ENCODE measurements at regions of chr2 and their contacts with region 1.

Region 1: GRCh38 chr2:113889471-113890252 is at the start of gene ACTR3:
- DNase-seq: peak; percentile 98 to 99 (median 99)
- H3K4me3 ChIP-seq: peak within 1 kb of the TSS; percentile 80 to 93
- H3K4me3 Mint-ChIP-seq: peak within 1 kb of the TSS; percentile 97 to 100 (median 99)
- H3K27ac ChIP-seq: peak within 1 kb of the TSS; percentile 93
- H3K27ac Mint-ChIP-seq: peak within 1 kb of the TSS; percentile 89 to 100 (median 98)
- H3K4me1 ChIP-seq: peaks cover 75% of the 10 kb centered on the region
- H3K4me1 Mint-ChIP-seq: peaks cover 62 to 88% (median 72%) of the 10 kb centered on the region in 4 donors
- H3K27me3 ChIP-seq: no peaks in the 10 kb centered on the region
- H3K27me3 Mint-ChIP-seq: no peaks in the 10 kb centered on the region
- total RNA-seq, gene ACTR3: 247 to 251 TPM

Region 2: DNA sequence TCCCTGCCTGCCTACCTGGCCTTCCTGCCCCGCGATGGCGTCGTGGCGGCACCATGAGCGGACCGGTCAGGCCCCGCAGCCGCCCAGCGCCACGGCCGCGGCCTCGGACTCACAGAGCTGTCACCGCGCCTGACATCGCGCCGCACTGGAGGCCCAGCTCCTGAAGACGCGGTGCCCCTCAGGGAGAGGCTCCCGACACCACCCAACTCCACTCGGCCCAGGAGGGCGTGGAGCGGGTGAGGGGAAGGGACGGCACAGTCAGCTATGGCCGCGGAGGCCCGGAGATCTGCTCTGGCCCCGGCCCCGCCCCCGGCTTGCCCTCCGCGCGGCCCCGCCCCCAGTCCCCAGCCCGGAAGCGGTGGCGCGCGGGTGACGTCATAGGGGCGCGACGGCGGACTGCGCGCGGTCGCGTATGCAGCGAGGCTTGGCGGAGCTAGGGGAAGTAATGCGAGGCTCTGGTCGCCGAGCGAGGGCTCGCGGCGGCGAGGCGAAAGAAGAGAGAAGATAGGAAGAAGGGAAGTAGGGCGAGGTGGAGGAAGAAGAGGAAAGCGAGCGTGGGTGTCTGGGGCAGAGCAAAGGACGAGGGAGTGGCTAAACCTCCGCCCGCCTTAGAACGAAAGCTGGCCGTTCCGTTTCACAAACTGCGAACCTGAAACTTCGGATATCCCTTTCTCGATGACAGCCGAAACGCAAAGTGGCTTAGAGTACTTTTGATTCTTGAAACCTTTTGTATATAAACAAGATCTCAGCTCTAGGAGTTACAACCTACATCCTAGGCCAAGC is 133.1 kb before region 1 on chr2 and contains the start of gene SLC35F5:
- CTCF ChIA-PET with region 1: interaction called, 4 read pairs
- POLR2A ChIA-PET with region 1: interaction called, 18 read pairs
- intact Hi-C with region 1: loop called (anchors 1 kb)
- DNase-seq: peak; percentile 87 to 97 (median 91)
- H3K4me3 ChIP-seq: peak within 1 kb of the TSS; percentile 95 to 100
- H3K4me3 Mint-ChIP-seq: peak within 1 kb of the TSS; percentile 92 to 99 (median 96)
- H3K27ac ChIP-seq: peak within 1 kb of the TSS; percentile 80
- H3K27ac Mint-ChIP-seq: peak within 1 kb of the TSS; percentile 96 to 100 (median 98)
- H3K4me1 ChIP-seq: peaks cover 25% of the 10 kb centered on the region
- H3K4me1 Mint-ChIP-seq: peaks cover 17 to 33% (median 25%) of the 10 kb centered on the region in 4 donors
- H3K27me3 ChIP-seq: no peaks in the 10 kb centered on the region
- H3K27me3 Mint-ChIP-seq: no peaks in the 10 kb centered on the region
- total RNA-seq, gene SLC35F5: 29.9 to 30.9 TPM

Region 3: DNA sequence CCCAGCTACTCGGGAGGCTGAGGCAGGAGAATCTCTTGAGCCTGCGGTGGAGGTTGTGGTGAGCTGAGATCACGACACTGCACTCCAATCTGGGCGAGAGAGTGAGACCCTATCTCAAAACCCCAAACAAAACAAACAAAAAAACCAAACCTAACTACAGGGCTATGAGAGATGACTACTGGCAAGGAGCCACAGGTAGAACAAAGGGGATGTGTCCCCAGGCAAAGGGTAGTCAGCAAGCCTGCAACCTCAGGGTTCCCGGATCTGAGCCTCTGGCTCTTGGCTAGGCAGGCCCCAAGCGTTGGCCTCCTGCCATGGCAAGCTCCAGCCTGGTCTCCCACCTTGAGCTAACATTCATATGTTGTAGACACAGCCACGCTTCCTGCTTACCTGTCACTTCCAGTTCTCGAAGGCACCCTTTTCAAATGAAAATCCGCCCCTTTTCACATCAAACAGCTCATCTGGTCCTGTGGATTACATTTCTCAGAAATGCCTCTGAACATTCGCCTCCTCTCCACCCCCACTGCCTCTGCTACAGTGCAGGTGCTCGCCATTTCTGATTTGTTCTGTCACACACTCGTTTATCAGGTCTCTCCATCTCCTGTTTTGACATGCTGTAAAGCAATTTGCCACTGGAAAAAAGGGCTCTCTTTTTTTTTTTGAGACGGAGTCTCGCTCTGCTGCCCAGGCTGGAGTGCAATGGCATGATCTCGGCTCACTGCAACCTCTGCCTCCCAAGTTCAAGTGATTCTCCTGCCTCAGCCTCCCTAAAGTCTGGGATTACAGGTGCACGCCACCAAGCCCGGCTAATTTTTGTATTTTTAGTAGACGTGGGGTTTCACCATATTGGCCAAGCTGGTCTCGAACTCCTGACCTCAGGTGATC is 12.9 kb before region 1 on chr2:
- CTCF ChIA-PET with region 1: interaction called, 7 read pairs
- POLR2A ChIA-PET with region 1: interaction called, 15 read pairs
- intact Hi-C with region 1: loop called (anchors 1 kb)
- DNase-seq: peak; percentile 72 to 86 (median 81)
- H3K4me3 ChIP-seq: no peak overlapping the region
- H3K4me3 Mint-ChIP-seq: peak overlapping the region; percentile 51 to 82 (median 74)
- H3K27ac ChIP-seq: peak overlapping the region; percentile 51
- H3K27ac Mint-ChIP-seq: peak overlapping the region; percentile 84 to 97 (median 91)
- H3K4me1 ChIP-seq: peaks cover 32% of the 10 kb centered on the region
- H3K4me1 Mint-ChIP-seq: peaks cover 28 to 47% (median 38%) of the 10 kb centered on the region in 4 donors
- H3K27me3 ChIP-seq: no peaks in the 10 kb centered on the region
- H3K27me3 Mint-ChIP-seq: no peaks in the 10 kb centered on the region

Region 4: GRCh38 chr2:113910110-113910717 is 20.6 kb after region 1 on chr2:
- CTCF ChIA-PET with region 1: interaction called, 4 read pairs
- POLR2A ChIA-PET with region 1: interaction called, 9 read pairs
- intact Hi-C with region 1: loop called (anchors 1 kb)
- DNase-seq: peak in 3 of 5 donors; percentile 15 to 90 (median 21)
- H3K4me3 ChIP-seq: no peak overlapping the region
- H3K4me3 Mint-ChIP-seq: peak overlapping the region in 7 of 8 donors; percentile 52 to 88 (median 62)
- H3K27ac ChIP-seq: peak overlapping the region; percentile 6
- H3K27ac Mint-ChIP-seq: peak overlapping the region; percentile 54 to 92 (median 80)
- H3K4me1 ChIP-seq: peaks cover 84% of the 10 kb centered on the region
- H3K4me1 Mint-ChIP-seq: peaks cover 44 to 88% (median 60%) of the 10 kb centered on the region in 4 donors
- H3K27me3 ChIP-seq: no peaks in the 10 kb centered on the region
- H3K27me3 Mint-ChIP-seq: no peaks in the 10 kb centered on the region

Region 5: DNA sequence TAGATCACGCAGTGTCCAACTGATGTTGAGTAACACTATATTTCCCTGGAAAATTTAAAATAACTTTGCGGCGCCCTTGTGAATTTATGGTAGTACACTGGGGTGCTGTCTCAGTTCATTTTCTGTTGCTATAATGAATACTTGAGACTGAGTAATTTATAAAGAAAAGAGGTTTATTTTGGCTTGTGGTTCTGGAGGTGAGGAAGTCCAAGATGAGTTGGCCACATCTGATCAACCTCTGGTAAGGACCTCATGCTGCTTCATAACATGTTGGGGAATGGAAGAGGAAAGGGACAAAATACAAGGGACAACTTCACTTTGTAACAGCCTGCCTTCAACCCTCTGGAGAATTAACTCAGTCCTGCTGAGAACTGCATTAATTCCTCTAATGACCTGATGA is 36.7 kb after region 1 on chr2:
- CTCF ChIA-PET with region 1: interaction called, 3 read pairs
- POLR2A ChIA-PET with region 1: no interaction called
- intact Hi-C with region 1: loop called (anchors 5 kb)
- DNase-seq: no peak
- H3K4me3 ChIP-seq: no peak overlapping the region
- H3K4me3 Mint-ChIP-seq: no peak overlapping the region
- H3K27ac ChIP-seq: no peak overlapping the region
- H3K27ac Mint-ChIP-seq: peak overlapping the region in 5 of 7 donors; percentile 15 to 43 (median 30)
- H3K4me1 ChIP-seq: peaks cover 32% of the 10 kb centered on the region
- H3K4me1 Mint-ChIP-seq: peaks cover 19 to 33% (median 24%) of the 10 kb centered on the region in 4 donors
- H3K27me3 ChIP-seq: no peaks in the 10 kb centered on the region
- H3K27me3 Mint-ChIP-seq: no peaks in the 10 kb centered on the region

Region 6: DNA sequence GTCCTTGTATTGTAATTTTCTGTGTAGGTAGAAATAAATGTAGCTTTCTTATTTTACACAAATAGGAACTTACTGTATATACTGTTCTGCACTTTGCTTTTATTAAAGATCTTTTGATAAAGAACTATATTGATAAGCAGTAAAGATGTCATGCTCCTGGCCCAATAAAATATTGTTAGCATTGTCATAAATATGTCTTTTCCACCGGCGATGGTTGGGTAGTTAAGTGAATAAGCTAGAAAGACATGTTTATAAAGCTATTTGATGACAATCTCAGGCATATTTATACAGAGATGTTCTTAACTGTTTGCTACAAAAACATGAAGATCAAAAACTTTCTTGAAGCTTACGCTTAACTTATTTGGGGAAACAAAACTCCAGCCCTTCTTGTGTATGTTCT is 69.5 kb after region 1 on chr2:
- CTCF ChIA-PET with region 1: no interaction called
- POLR2A ChIA-PET with region 1: no interaction called
- intact Hi-C with region 1: loop called (anchors 5 kb)
- DNase-seq: no peak
- H3K4me3 ChIP-seq: no peak overlapping the region
- H3K4me3 Mint-ChIP-seq: no peak overlapping the region
- H3K27ac ChIP-seq: no peak overlapping the region
- H3K27ac Mint-ChIP-seq: peak overlapping the region in 1 of 7 donors; percentile 27
- H3K4me1 ChIP-seq: no peaks in the 10 kb centered on the region
- H3K4me1 Mint-ChIP-seq: peaks cover 0 to 15% (median 2%) of the 10 kb centered on the region in 4 donors
- H3K27me3 ChIP-seq: no peaks in the 10 kb centered on the region
- H3K27me3 Mint-ChIP-seq: no peaks in the 10 kb centered on the region